ENCODE measurements at regions of chr1 and their contacts with region 1.

Region 1: GRCh38 chr1:40096977-40097782 is at the start of gene PPT1:
- DNase-seq: peak; percentile 90
- H3K4me3 ChIP-seq: peak within 1 kb of the TSS; percentile 85 to 92
- H3K27ac ChIP-seq: peak within 1 kb of the TSS in 1 of 2 experiments; percentile 78; a peak in 3 of 4 replicates
- H3K4me1 ChIP-seq: peaks cover 0 to 12% of the 10 kb centered on the region in 2 experiments; a peak in 2 of 4 replicates
- H3K27me3 ChIP-seq: no peaks in the 10 kb centered on the region
- CTCF ChIP-seq: peak; percentile 35
- EP300 ChIP-seq: peak in 1 of 2 experiments; percentile 8; a peak in 1 of 4 replicates
- RAD21 ChIP-seq: no peak
- polyA plus RNA-seq, gene PPT1: 26.0 and 37.6 TPM in 2 replicates

Region 2: GRCh38 chr1:40078512-40079333 is 18.5 kb before region 1 on chr1:
- CTCF ChIA-PET with region 1: interaction called, 16 read pairs
- POLR2A ChIA-PET with region 1: no interaction called
- DNase-seq: peak; percentile 70
- H3K4me3 ChIP-seq: no peak overlapping the region
- H3K27ac ChIP-seq: no peak overlapping the region
- H3K4me1 ChIP-seq: peaks cover 0 to 5% of the 10 kb centered on the region in 2 experiments; a peak in 1 of 4 replicates
- H3K27me3 ChIP-seq: no peaks in the 10 kb centered on the region
- CTCF ChIP-seq: peak; percentile 79
- EP300 ChIP-seq: no peak
- RAD21 ChIP-seq: peak; percentile 58

Measured in SK-N-SH (cell line).